ENCODE measurements at regions of chr4 and their contacts with region 1.

Region 1: GRCh38 chr4:16001484-16001858 is 38.5 kb upstream of the FGFBP2 start:
- DNase-seq: peak; percentile 82
- H3K4me3 Mint-ChIP-seq: no peak overlapping the region
- H3K27ac Mint-ChIP-seq: no peak overlapping the region
- H3K4me1 Mint-ChIP-seq: no peaks in the 10 kb centered on the region
- H3K27me3 Mint-ChIP-seq: peaks cover 13% of the 10 kb centered on the region

Region 2: DNA sequence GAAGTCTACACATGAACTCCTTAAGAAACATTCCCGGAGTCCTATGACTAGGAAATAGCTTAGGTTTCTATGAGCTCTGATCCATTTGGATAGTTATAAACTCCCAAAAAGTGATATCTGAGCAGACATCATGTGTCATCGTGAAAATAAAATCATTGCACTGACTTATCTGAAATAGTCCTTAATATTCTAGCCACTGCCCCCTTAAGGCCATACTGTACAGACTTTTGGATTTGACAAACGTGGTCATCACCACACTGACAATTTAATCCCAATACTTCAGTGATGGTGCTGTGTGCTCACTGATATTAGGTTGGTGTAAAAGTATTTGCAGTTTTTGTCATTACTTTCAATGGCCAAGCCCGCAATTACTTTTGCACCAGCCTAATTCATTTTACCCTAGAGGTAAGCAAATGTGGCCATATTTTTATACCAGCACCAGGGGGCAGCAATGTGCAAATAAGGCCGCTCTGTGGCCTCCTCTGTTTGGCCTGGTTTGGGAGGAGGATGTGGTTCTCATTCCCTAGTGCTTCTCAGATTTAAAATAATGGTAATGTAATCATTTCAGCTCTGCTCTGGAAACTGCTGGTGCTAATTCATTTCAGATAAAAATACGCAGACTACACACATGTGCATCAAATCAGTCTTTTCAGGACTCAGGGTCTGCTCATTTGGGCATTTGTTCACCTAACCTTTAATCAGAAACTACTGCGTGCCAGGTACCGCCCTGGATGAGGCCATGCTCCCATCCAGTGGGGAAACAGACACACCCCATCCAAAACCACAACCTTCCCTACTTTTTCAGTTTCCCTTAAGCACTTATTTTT is 770.0 kb before region 1 on chr4:
- intact Hi-C with region 1: loop called (anchors 5 kb)
- DNase-seq: peak; percentile 91
- H3K4me3 Mint-ChIP-seq: no peak overlapping the region
- H3K27ac Mint-ChIP-seq: no peak overlapping the region
- H3K4me1 Mint-ChIP-seq: peaks cover 24% of the 10 kb centered on the region
- H3K27me3 Mint-ChIP-seq: peaks cover 1% of the 10 kb centered on the region

Region 3: DNA sequence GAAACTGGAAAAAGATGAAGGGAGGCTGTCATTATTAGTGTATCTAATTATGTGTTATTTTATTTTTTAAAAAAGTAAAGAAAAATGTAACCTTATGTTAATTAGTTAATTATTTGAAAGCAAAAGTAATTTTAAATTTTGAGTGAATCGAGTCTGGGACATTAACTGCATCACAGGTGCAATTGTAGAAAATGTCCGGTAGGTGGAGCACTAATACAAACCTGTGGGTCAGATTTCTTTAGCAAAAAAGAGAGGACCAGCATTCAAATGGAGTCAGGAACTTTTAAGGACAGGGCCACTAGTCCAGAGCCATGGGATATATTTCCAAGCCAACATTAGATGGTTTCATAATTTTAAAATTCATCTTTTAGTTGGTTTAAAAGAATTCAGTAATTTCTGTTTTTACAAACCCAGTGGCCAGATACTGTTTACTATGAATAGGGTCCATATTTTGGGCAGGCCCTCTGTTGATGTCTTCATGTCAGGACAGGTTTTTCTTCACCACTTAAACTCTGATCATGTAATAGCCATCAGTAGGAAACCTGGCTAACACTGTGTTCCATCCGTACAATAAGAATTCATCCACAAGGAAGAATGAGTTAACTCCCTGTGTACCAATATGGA is 271.4 kb before region 1 on chr4:
- intact Hi-C with region 1: loop called (anchors 1 kb)
- DNase-seq: peak; percentile 81
- H3K4me3 Mint-ChIP-seq: no peak overlapping the region
- H3K27ac Mint-ChIP-seq: no peak overlapping the region
- H3K4me1 Mint-ChIP-seq: peaks cover 21% of the 10 kb centered on the region
- H3K27me3 Mint-ChIP-seq: peaks cover 2% of the 10 kb centered on the region

Region 4: GRCh38 chr4:15805583-15806517 is 195.6 kb before region 1 on chr4:
- intact Hi-C with region 1: loop called (anchors 1 kb)
- DNase-seq: peak; percentile 81
- H3K4me3 Mint-ChIP-seq: no peak overlapping the region
- H3K27ac Mint-ChIP-seq: peak overlapping the region; percentile 23
- H3K4me1 Mint-ChIP-seq: peaks cover 46% of the 10 kb centered on the region
- H3K27me3 Mint-ChIP-seq: no peaks in the 10 kb centered on the region

Region 5: GRCh38 chr4:15882675-15883086 is 118.8 kb before region 1 on chr4:
- intact Hi-C with region 1: loop called (anchors 1 kb)
- DNase-seq: peak; percentile 81
- H3K4me3 Mint-ChIP-seq: no peak overlapping the region
- H3K27ac Mint-ChIP-seq: no peak overlapping the region
- H3K4me1 Mint-ChIP-seq: no peaks in the 10 kb centered on the region
- H3K27me3 Mint-ChIP-seq: peaks cover 17% of the 10 kb centered on the region

Region 6: GRCh38 chr4:15963001-15963451 is 38.4 kb before region 1 on chr4 and contains the start of gene FGFBP2:
- intact Hi-C with region 1: loop called (anchors 1 kb)
- DNase-seq: peak; percentile 86
- H3K4me3 Mint-ChIP-seq: peak within 1 kb of the TSS; percentile 35
- H3K27ac Mint-ChIP-seq: peak within 1 kb of the TSS; percentile 37
- H3K4me1 Mint-ChIP-seq: peaks cover 12% of the 10 kb centered on the region
- H3K27me3 Mint-ChIP-seq: peaks cover 12% of the 10 kb centered on the region
- total RNA-seq, gene FGFBP2: 1.8 and 2.0 TPM in 2 replicates

Measured in activated CD4-positive, alpha-beta T cell treated with anti-CD3 and anti-CD28 coated beads, Interleukin-2, amount 10 ng/mL, durations not matched to agents 24 days and 14 days (primary cell).